Right lobe of liver (tissue), 6 donors: ENCODE measurements at regions of chr1 and their contacts with region 1.

Region 1: GRCh38 chr1:207963427-207964194 is 52.7 kb upstream of the CD34 start:
- DNase-seq: peak; percentile 90 to 96 (median 95)
- ATAC-seq: peak; percentile 87 to 94 (median 90)
- H3K4me3 ChIP-seq: peak overlapping the region; percentile 46 to 78 (median 72)
- H3K27ac ChIP-seq: peak overlapping the region; percentile 93 to 99 (median 95)
- H3K4me1 ChIP-seq: peaks cover 0 to 14% (median 4%) of the 10 kb centered on the region in 4 donors
- H3K27me3 ChIP-seq: no peaks in the 10 kb centered on the region
- CTCF ChIP-seq: peak in 3 of 4 donors; percentile 99 to 100 (median 100)
- POLR2A ChIP-seq: peak; percentile 97

Region 2: GRCh38 chr1:207811920-207812720 is 151.5 kb before region 1 on chr1:
- intact Hi-C with region 1: loop called in 1 of 2 experiments (anchors 10 kb)
- DNase-seq: peak; percentile 88 to 96 (median 96)
- ATAC-seq: peak; percentile 71 to 86 (median 82)
- H3K4me3 ChIP-seq: no peak overlapping the region
- H3K27ac ChIP-seq: peak overlapping the region; percentile 74 to 91 (median 78)
- H3K4me1 ChIP-seq: peaks cover 0 to 94% (median 39%) of the 10 kb centered on the region in 4 donors
- H3K27me3 ChIP-seq: no peaks in the 10 kb centered on the region
- CTCF ChIP-seq: peak; percentile 59 to 79 (median 68)
- POLR2A ChIP-seq: no peak

Region 3: GRCh38 chr1:207831517-207832327 is 131.9 kb before region 1 on chr1:
- intact Hi-C with region 1: loop called in 1 of 2 experiments (anchors 5 kb)
- DNase-seq: no peak
- ATAC-seq: no peak
- H3K4me3 ChIP-seq: no peak overlapping the region
- H3K27ac ChIP-seq: no peak overlapping the region
- H3K4me1 ChIP-seq: peaks cover 0 to 24% (median 10%) of the 10 kb centered on the region in 4 donors
- H3K27me3 ChIP-seq: no peaks in the 10 kb centered on the region
- CTCF ChIP-seq: no peak
- POLR2A ChIP-seq: no peak

Region 4: GRCh38 chr1:207885129-207886032 is 78.2 kb before region 1 on chr1:
- intact Hi-C with region 1: loop called (anchors 5 kb)
- DNase-seq: peak; percentile 80 to 84 (median 81)
- ATAC-seq: peak; percentile 91 to 95 (median 94)
- H3K4me3 ChIP-seq: no peak overlapping the region
- H3K27ac ChIP-seq: no peak overlapping the region
- H3K4me1 ChIP-seq: peaks cover 0 to 14% (median 0%) of the 10 kb centered on the region in 4 donors
- H3K27me3 ChIP-seq: no peaks in the 10 kb centered on the region
- CTCF ChIP-seq: peak; percentile 93 to 97 (median 94)
- POLR2A ChIP-seq: no peak

Region 5: DNA sequence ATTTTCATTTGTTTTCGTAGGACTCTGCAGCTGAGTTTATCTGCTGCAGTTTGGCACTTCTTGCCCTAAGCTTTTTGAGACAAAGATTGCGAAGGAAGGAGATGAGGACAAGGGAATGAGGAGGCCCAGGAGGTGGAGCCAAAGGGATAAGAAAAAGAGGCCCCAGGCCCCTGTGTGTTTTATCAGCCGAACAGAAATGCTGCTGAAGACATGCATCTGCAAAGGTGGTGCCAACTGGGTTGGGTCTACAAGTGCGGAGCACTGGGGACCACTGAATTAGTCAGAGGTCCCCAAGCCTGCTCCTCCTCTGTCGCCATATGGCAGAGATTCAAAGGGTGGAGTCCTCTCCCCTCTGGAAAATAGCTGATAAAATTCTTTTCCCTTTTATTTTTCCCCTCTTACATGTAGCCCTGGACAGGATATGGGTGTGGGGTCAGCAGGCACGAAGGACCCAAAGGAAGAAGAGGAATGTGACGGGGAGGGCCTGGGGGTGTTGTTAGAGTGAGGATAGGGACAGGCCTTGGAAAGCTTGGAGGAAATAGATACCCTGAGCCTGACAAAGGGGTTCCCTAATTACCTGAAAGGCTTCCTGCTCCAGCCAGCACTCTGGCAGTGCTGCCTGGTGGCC is 55.4 kb before region 1 on chr1:
- intact Hi-C with region 1: no loop called
- DNase-seq: no peak
- ATAC-seq: peak; percentile 11 to 36 (median 20)
- H3K4me3 ChIP-seq: no peak overlapping the region
- H3K27ac ChIP-seq: no peak overlapping the region
- H3K4me1 ChIP-seq: no peaks in the 10 kb centered on the region
- H3K27me3 ChIP-seq: no peaks in the 10 kb centered on the region
- CTCF ChIP-seq: no peak
- POLR2A ChIP-seq: no peak